ENCODE measurements at regions of chr5 and their contacts with region 1.

Region 1: GRCh38 chr5:87400305-87400899 is 12.3 kb downstream of the CCNH start:
- DNase-seq: peak; percentile 69
- H3K4me3 ChIP-seq: no peak overlapping the region
- H3K27ac ChIP-seq: no peak overlapping the region
- H3K4me1 ChIP-seq: peaks cover 15% of the 10 kb centered on the region
- H3K27me3 ChIP-seq: no peaks in the 10 kb centered on the region
- CTCF ChIP-seq: peak; percentile 66

Region 2: DNA sequence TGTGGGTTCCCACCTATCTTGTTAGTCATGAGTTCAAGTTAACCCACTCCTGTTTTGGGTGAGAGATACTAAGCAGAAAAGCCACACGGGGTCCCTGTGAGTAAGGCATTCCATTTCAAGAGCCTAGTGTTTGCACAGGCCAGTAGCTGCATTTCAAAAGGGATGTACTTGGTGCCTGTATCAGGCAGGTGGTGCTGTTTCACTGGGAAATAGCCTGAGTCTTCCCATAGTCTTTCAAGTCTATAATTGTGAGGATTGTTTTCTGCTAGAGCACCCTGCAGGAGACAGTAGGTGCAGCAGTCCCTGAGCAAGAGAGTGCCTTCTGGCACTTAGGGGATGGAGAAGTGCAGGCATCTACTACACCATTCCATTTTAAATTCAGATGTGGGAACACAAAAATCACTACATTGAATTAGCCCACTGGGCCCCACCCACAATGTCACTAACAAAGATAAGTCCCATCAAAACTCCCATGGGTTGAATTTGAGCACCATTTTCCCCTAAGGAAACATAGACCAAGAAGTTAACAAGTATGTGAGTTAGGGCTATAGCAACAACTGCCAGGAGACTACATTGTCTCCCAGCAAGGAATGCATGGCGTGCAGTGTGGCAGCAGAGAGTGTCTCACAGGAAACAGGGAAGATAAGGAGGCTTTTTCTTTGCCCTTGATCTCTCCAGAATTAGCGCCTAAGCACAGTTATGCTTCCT is 519.5 kb before region 1 on chr5:
- CTCF ChIA-PET with region 1: no interaction called
- POLR2A ChIA-PET with region 1: no interaction called
- intact Hi-C with region 1: loop called (anchors 5 kb)
- DNase-seq: peak; percentile 86
- H3K4me3 ChIP-seq: no peak overlapping the region
- H3K27ac ChIP-seq: no peak overlapping the region
- H3K4me1 ChIP-seq: no peaks in the 10 kb centered on the region
- H3K27me3 ChIP-seq: no peaks in the 10 kb centered on the region
- CTCF ChIP-seq: peak; percentile 86

Region 3: GRCh38 chr5:86979811-86980411 is 420.5 kb before region 1 on chr5:
- CTCF ChIA-PET with region 1: no interaction called
- POLR2A ChIA-PET with region 1: no interaction called
- intact Hi-C with region 1: loop called (anchors 5 kb)
- DNase-seq: peak; percentile 83
- H3K4me3 ChIP-seq: no peak overlapping the region
- H3K27ac ChIP-seq: peak overlapping the region; percentile 9
- H3K4me1 ChIP-seq: peaks cover 9% of the 10 kb centered on the region
- H3K27me3 ChIP-seq: no peaks in the 10 kb centered on the region
- CTCF ChIP-seq: no peak

Region 4: GRCh38 chr5:87015901-87016300 is 384.5 kb before region 1 on chr5:
- CTCF ChIA-PET with region 1: interaction called, 3 read pairs
- POLR2A ChIA-PET with region 1: no interaction called
- intact Hi-C with region 1: loop called (anchors 5 kb)
- DNase-seq: no peak
- H3K4me3 ChIP-seq: no peak overlapping the region
- H3K27ac ChIP-seq: no peak overlapping the region
- H3K4me1 ChIP-seq: peaks cover 10% of the 10 kb centered on the region
- H3K27me3 ChIP-seq: no peaks in the 10 kb centered on the region
- CTCF ChIP-seq: no peak

Region 5: DNA sequence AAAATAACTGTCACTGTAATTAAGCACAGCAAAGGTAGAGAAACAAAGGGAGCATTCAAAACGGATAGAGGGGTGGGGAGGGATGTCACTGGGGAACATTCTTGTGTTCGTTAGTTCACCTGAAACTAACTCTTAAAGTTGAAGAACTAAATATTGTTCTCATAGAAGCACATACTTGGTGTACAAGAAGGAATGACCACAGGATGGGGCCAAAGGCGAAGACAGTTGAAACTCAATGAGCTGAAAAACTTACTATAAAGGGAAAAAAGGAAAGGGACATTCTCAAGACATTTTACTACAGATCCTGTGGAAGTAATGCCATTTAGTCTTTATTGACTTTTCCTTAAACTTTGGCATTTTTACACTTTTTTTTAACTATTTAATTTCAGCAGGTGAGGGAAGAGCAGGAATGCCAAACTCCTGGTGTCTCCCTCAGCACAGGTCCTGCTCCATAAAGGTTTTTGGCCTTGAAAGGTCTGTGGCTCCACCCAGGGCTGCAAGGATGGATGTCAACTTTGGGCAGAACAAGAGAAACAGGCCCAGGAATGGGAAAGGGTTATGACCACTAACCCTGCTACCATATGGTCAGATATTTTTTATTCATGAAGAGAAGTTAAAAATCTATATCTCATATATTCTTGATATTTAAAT is 330.3 kb before region 1 on chr5:
- CTCF ChIA-PET with region 1: interaction called, 4 read pairs
- POLR2A ChIA-PET with region 1: no interaction called
- intact Hi-C with region 1: loop called (anchors 2 kb)
- DNase-seq: peak; percentile 65
- H3K4me3 ChIP-seq: no peak overlapping the region
- H3K27ac ChIP-seq: no peak overlapping the region
- H3K4me1 ChIP-seq: no peaks in the 10 kb centered on the region
- H3K27me3 ChIP-seq: no peaks in the 10 kb centered on the region
- CTCF ChIP-seq: peak; percentile 52

Region 6: DNA sequence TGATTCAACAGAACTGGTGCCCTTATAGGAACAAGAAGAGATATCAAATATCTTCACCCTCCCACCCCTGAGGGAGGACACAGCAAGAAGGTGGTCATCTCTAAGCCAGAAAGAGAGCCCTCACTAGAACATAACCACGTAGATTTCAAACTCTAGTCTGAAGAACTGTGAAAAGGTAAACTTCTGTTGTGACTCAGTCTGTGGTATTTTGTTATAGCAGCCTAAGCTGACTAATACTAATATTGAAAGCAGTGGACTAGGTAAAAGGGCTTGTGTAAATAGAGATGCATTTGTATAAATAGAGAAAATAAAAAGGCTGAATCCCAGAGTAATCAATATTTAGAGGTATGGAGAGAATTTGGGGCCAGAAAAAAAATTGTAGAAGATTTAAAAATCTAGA is 170.0 kb after region 1 on chr5:
- CTCF ChIA-PET with region 1: no interaction called
- POLR2A ChIA-PET with region 1: no interaction called
- intact Hi-C with region 1: no loop called
- DNase-seq: no peak
- H3K4me3 ChIP-seq: no peak overlapping the region
- H3K27ac ChIP-seq: no peak overlapping the region
- H3K4me1 ChIP-seq: no peaks in the 10 kb centered on the region
- H3K27me3 ChIP-seq: no peaks in the 10 kb centered on the region
- CTCF ChIP-seq: no peak

Measured in A673 (cell line).